ENCODE measurements at regions of chr6 and their contacts with region 1.

Region 1: DNA sequence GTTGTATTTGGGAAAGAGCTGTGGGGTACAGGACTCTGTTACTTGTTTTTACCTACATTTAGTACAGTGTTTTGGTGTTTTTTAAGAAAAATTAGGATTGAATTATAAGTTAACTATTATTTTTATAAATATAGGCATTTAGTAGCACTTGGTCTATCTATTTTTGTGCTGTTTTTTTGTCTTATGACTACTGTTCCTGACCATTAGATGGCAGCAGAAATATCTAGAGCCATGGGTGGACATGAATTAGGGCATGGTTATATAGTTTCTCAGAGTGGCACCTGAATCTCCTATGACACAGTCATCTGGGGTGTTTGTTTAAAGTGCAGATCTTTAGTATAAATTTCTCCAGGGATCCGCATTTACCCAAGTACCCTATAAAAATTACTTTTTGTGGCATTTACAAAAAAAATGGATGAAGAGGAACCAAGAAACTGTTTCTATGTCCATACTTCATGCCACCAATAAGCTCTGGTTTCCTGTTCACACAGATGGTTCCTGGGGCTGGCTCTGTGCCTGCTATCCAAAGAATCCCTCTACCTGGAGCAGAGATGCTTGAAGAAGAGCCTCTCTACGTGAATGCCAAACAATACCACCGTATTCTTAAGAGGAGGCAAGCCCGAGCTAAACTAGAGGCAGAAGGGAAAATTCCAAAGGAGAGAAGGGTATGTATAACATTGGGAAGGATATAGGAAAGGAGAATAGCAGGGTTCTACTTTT is 19.8 kb downstream of the NFYA start:
- DNase-seq: no peak
- H3K4me3 ChIP-seq: no peak overlapping the region
- H3K27ac ChIP-seq: no peak overlapping the region
- H3K4me1 ChIP-seq: no peaks in the 10 kb centered on the region
- H3K27me3 ChIP-seq: no peaks in the 10 kb centered on the region
- CTCF ChIP-seq: peak; percentile 55

Region 2: DNA sequence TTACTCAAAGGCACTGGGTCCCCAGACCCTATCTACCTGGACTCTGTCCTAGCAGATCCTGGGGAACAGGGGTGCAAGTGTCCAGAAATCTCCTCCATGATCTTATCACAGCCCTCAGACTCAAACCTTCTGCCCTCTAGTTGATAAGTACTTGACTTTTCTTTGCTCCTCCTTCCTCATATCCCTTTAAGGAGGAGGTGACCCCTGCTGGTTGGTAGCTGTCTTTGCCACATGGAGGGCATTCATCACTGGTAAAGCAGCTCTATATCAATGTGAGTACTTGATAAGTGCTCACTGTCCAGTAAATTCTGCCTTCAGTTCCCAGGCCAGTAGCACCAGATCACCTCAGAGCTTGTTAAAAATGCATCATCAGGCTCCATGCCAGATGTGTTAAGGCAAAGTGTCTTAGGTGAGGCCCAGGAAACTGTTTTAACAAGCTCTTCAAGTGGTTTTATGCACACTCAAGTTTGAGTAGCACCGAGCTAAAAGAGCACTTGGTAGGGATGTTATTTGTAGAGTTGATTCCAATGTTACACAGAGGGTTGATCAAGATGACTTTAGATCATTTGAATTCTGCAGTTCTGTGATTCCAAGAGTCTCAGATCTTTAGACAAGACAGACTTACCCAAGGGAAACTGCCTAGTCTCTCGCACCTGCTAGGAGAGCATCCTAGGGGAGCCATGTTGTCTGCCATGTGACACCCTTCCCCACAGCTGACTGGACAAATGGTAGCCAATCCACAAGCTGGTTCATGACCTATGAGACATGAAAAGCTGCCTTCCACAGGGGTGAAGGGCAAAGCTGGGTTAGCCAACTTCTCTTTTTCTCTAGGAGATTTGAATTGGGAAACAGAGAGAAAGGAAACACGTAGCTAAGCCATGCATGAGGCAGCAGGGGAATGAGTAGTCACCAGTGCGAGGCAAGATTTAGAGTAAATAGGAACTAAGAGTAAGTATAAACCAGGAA is 89.8 kb after region 1 on chr6:
- CTCF ChIA-PET with region 1: no interaction called
- POLR2A ChIA-PET with region 1: no interaction called
- intact Hi-C with region 1: loop called (anchors 2 kb)
- DNase-seq: peak; percentile 10 to 62
- H3K4me3 ChIP-seq: no peak overlapping the region
- H3K27ac ChIP-seq: no peak overlapping the region
- H3K4me1 ChIP-seq: no peaks in the 10 kb centered on the region
- H3K27me3 ChIP-seq: peaks cover 57% of the 10 kb centered on the region
- CTCF ChIP-seq: peak; percentile 68

Region 3: GRCh38 chr6:41306187-41306854 is 213.7 kb after region 1 on chr6:
- CTCF ChIA-PET with region 1: interaction called, 12 read pairs
- POLR2A ChIA-PET with region 1: no interaction called
- intact Hi-C with region 1: no loop called
- DNase-seq: peak; percentile 52 to 65
- H3K4me3 ChIP-seq: no peak overlapping the region
- H3K27ac ChIP-seq: no peak overlapping the region
- H3K4me1 ChIP-seq: no peaks in the 10 kb centered on the region
- H3K27me3 ChIP-seq: peaks cover 8% of the 10 kb centered on the region; the same call in 1 of the 2 replicates
- CTCF ChIP-seq: peak; percentile 78

Region 4: DNA sequence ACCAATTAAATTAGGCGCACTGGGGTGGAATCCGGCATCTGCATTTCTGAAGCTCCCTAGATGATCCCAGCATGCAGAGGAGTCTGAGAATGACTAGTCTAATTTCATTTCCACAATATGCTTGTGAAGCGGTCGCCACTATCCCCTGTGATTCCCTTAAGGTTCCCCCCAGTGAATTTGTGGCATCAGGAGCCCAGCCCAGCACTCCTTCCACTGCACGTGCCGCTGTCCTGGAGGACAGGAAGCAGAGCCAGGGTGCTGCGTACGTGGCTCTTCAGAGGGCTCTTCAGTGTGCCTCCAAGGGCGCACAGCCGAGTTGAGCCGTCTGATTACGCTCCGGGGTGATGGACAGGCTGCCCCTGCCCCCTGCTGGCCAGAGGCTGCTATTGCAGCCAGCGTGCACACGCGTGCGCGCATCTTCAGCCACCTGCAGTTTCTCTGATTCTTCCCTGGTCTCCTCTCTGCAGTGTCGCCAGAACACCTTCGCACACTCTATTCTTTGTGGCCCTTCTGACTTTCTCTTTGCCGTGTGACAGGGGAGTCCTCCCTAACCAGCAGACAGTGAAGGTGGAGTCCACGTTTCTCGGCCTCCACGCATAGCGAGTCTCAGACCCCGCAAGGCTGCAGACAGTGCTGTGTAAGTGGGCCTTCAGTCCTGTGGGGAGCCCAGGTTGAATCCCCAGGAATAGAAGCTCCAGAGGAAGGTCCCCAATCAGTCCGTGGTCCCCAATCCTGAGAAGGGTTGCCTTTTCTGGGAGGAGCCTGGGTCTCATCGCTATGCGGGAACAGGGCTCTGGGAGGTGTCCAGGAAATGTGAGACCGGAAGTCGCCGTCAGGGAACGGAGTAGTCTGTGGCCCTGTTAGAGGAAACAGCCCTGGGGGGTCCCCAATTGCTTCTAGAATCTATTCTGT is 226.3 kb after region 1 on chr6:
- CTCF ChIA-PET with region 1: no interaction called
- POLR2A ChIA-PET with region 1: no interaction called
- intact Hi-C with region 1: loop called (anchors 2 kb)
- DNase-seq: peak; percentile 46 to 70
- H3K4me3 ChIP-seq: peak overlapping the region; percentile 33; the same call in 1 of the 2 replicates
- H3K27ac ChIP-seq: no peak overlapping the region
- H3K4me1 ChIP-seq: peaks cover 11% of the 10 kb centered on the region
- H3K27me3 ChIP-seq: peaks cover 9% of the 10 kb centered on the region; the same call in 1 of the 2 replicates
- CTCF ChIP-seq: peak; percentile 99

Measured in PC-9 (cell line).